B cell (primary cell): ENCODE measurements at regions of chr2 and their contacts with region 1.

Region 1: GRCh38 chr2:174465327-174465726 is 21.5 kb downstream of the GPR155 start:
- DNase-seq: no peak
- ATAC-seq: no peak
- H3K4me3 ChIP-seq: no peak overlapping the region
- H3K4me3 Mint-ChIP-seq: no peak overlapping the region
- H3K27ac ChIP-seq: no peak overlapping the region
- H3K27ac Mint-ChIP-seq: no peak overlapping the region
- H3K4me1 ChIP-seq: no peaks in the 10 kb centered on the region
- H3K4me1 Mint-ChIP-seq: no peaks in the 10 kb centered on the region
- H3K27me3 ChIP-seq: no peaks in the 10 kb centered on the region
- H3K27me3 Mint-ChIP-seq: no peaks in the 10 kb centered on the region
- CTCF ChIP-seq: no peak

Region 2: DNA sequence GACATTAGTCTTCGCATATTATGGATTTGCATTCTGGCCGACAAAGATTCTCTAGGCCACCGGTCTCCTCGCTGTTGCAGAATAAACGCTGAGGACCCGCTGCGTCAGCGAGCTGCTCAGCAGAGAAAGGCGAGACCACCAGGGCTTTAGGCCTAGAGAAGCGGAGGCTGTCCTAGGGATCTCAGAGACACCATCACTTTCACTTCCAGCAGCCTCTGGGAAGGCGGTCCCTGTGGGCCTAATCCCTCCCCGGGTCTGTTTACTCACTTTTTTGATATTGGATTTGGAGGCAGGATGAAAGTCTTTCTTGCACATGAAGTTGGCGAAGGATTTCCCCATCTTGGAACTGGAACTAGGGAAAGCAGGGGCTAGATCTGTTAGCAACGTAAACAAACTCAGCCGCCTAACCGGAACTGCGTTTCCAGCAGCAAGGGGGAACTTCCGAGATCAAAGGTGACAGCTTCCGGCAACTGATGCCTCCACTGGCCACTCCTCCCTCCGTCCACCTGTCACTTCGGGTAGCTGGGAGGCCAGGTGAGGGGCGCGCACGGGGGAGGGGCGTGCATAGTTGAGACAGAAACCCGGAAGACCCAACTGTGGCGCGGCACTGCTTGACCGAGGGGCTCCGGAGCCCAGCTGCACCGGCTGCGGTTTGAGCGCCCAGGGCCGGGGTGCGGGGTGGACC is 69.9 kb before region 1 on chr2 and contains the start of gene SCRN3:
- CTCF ChIA-PET with region 1: interaction called, 13 read pairs
- POLR2A ChIA-PET with region 1: no interaction called
- intact Hi-C with region 1: no loop called
- DNase-seq: peak; percentile 87
- ATAC-seq: peak; percentile 94
- H3K4me3 ChIP-seq: peak within 1 kb of the TSS; percentile 81 to 97 (median 90)
- H3K4me3 Mint-ChIP-seq: peak within 1 kb of the TSS; percentile 99
- H3K27ac ChIP-seq: peak within 1 kb of the TSS; percentile 88 to 94
- H3K27ac Mint-ChIP-seq: peak within 1 kb of the TSS; percentile 99
- H3K4me1 ChIP-seq: peaks cover 14 to 24% of the 10 kb centered on the region in 2 donors
- H3K4me1 Mint-ChIP-seq: peaks cover 39% of the 10 kb centered on the region
- H3K27me3 ChIP-seq: no peaks in the 10 kb centered on the region
- H3K27me3 Mint-ChIP-seq: no peaks in the 10 kb centered on the region
- CTCF ChIP-seq: no peak
- total RNA-seq, gene SCRN3: 16.9 and 21.6 TPM in 2 replicates

Region 3: DNA sequence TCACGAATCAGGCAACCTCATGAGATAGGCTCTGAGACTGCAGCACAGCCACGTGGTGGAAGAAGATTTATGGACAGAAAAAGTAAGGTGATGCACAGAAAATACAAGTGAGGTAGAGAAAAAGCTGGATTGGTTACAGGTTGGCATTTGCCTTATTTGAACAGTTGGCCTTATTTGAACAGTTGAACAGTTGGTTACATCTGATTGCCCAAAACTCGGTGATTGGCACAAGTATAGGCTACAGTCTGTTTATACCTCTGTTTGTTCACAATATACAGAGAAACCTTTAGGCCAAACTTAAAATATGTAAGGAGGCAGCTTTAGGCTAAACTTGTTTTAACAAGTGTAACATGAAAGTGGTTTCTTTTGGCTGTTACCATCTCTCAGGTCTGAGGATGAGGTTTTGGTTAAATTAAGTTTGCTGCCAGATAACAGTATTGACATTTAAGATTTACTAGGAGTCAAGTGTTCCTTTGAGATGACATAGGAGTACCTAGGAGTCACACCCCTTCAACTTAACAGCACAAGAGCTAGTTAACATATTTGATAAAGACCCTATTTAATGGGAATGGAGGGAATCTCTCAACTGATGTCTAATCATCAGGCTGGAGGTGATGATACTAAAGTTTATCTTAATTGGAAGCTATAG is 38.0 kb after region 1 on chr2:
- CTCF ChIA-PET with region 1: interaction called, 16 read pairs
- POLR2A ChIA-PET with region 1: interaction called, 3 read pairs
- intact Hi-C with region 1: no loop called
- DNase-seq: no peak
- ATAC-seq: no peak
- H3K4me3 ChIP-seq: no peak overlapping the region
- H3K4me3 Mint-ChIP-seq: no peak overlapping the region
- H3K27ac ChIP-seq: no peak overlapping the region
- H3K27ac Mint-ChIP-seq: no peak overlapping the region
- H3K4me1 ChIP-seq: no peaks in the 10 kb centered on the region
- H3K4me1 Mint-ChIP-seq: no peaks in the 10 kb centered on the region
- H3K27me3 ChIP-seq: peaks cover 0 to 3% (median 0%) of the 10 kb centered on the region in 4 experiments
- H3K27me3 Mint-ChIP-seq: peaks cover 4% of the 10 kb centered on the region
- CTCF ChIP-seq: no peak

Region 4: DNA sequence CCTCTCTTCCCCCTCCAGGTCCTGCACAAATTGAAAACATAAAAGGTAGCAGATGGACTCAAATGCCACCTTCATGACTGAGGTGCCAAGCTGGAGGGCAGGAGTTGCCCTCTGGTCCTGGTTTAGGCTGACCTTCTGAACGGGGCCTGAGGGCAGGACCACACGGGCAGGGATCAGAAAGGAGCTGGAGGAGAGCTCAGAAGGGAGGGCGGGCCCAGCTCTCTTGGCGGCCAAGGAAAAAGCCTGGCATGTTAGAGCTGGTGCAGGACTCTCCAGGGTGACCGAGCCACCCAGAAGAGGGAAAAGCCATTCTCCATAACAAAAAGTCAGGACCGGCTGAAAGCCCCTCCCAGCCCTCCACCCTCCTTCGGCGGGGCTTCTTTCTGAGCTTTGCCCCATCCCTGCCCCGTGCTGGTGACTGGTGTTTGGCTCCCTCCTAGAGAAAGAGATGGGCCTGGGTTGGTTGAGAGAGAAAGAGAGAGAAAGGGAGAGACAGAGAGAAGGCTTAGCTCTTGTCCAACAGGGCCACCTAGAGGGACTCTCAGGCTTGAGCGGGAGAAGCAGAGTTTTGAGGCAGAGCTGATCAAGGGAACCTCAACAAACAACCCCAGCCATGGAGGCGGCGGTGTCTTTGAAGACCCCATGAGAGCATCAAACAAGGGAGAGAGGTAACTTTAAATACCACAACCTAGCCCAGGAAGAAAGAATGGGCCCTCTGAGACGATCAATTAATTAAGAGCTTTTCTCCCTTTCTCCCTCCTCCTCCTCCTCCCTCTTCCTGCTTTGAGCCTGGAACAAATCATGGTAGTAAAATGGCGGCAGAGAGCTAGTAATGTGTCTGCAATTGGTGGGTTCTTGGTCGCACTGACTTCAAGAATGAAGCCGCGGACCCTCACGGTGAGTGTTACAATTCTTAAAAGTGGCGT is 81.5 kb after region 1 on chr2:
- CTCF ChIA-PET with region 1: interaction called, 50 read pairs
- POLR2A ChIA-PET with region 1: no interaction called
- intact Hi-C with region 1: loop called (anchors 2 kb)
- DNase-seq: no peak
- ATAC-seq: peak; percentile 24
- H3K4me3 ChIP-seq: no peak overlapping the region
- H3K4me3 Mint-ChIP-seq: no peak overlapping the region
- H3K27ac ChIP-seq: no peak overlapping the region
- H3K27ac Mint-ChIP-seq: no peak overlapping the region
- H3K4me1 ChIP-seq: peaks cover 4 to 6% of the 10 kb centered on the region in 2 donors
- H3K4me1 Mint-ChIP-seq: peaks cover 7% of the 10 kb centered on the region
- H3K27me3 ChIP-seq: no peaks in the 10 kb centered on the region
- H3K27me3 Mint-ChIP-seq: no peaks in the 10 kb centered on the region
- CTCF ChIP-seq: peak; percentile 11

Region 5: GRCh38 chr2:174577967-174578589 is 112.8 kb after region 1 on chr2:
- CTCF ChIA-PET with region 1: interaction called, 25 read pairs
- POLR2A ChIA-PET with region 1: no interaction called
- intact Hi-C with region 1: loop called (anchors 1 kb)
- DNase-seq: peak; percentile 78
- ATAC-seq: peak; percentile 72
- H3K4me3 ChIP-seq: no peak overlapping the region
- H3K4me3 Mint-ChIP-seq: no peak overlapping the region
- H3K27ac ChIP-seq: peak overlapping the region in 1 of 2 donors; percentile 72
- H3K27ac Mint-ChIP-seq: peak overlapping the region; percentile 57
- H3K4me1 ChIP-seq: peaks cover 31 to 34% of the 10 kb centered on the region in 2 donors
- H3K4me1 Mint-ChIP-seq: peaks cover 52% of the 10 kb centered on the region
- H3K27me3 ChIP-seq: no peaks in the 10 kb centered on the region
- H3K27me3 Mint-ChIP-seq: no peaks in the 10 kb centered on the region
- CTCF ChIP-seq: peak; percentile 81

Region 6: GRCh38 chr2:174656671-174657176 is 191.4 kb after region 1 on chr2:
- CTCF ChIA-PET with region 1: interaction called, 15 read pairs
- POLR2A ChIA-PET with region 1: no interaction called
- intact Hi-C with region 1: no loop called
- DNase-seq: no peak
- ATAC-seq: peak; percentile 31
- H3K4me3 ChIP-seq: no peak overlapping the region
- H3K4me3 Mint-ChIP-seq: no peak overlapping the region
- H3K27ac ChIP-seq: no peak overlapping the region
- H3K27ac Mint-ChIP-seq: no peak overlapping the region
- H3K4me1 ChIP-seq: no peaks in the 10 kb centered on the region
- H3K4me1 Mint-ChIP-seq: peaks cover 5% of the 10 kb centered on the region
- H3K27me3 ChIP-seq: no peaks in the 10 kb centered on the region
- H3K27me3 Mint-ChIP-seq: no peaks in the 10 kb centered on the region
- CTCF ChIP-seq: no peak

Region 7: GRCh38 chr2:174697255-174697654 is 231.9 kb after region 1 on chr2:
- CTCF ChIA-PET with region 1: interaction called, 194 read pairs
- POLR2A ChIA-PET with region 1: no interaction called
- intact Hi-C with region 1: no loop called
- DNase-seq: peak; percentile 73
- ATAC-seq: peak; percentile 92
- H3K4me3 ChIP-seq: no peak overlapping the region
- H3K4me3 Mint-ChIP-seq: no peak overlapping the region
- H3K27ac ChIP-seq: no peak overlapping the region
- H3K27ac Mint-ChIP-seq: no peak overlapping the region
- H3K4me1 ChIP-seq: no peaks in the 10 kb centered on the region
- H3K4me1 Mint-ChIP-seq: no peaks in the 10 kb centered on the region
- H3K27me3 ChIP-seq: peaks cover 0 to 18% (median 0%) of the 10 kb centered on the region in 4 experiments
- H3K27me3 Mint-ChIP-seq: peaks cover 16% of the 10 kb centered on the region
- CTCF ChIP-seq: peak; percentile 84

Region 8: DNA sequence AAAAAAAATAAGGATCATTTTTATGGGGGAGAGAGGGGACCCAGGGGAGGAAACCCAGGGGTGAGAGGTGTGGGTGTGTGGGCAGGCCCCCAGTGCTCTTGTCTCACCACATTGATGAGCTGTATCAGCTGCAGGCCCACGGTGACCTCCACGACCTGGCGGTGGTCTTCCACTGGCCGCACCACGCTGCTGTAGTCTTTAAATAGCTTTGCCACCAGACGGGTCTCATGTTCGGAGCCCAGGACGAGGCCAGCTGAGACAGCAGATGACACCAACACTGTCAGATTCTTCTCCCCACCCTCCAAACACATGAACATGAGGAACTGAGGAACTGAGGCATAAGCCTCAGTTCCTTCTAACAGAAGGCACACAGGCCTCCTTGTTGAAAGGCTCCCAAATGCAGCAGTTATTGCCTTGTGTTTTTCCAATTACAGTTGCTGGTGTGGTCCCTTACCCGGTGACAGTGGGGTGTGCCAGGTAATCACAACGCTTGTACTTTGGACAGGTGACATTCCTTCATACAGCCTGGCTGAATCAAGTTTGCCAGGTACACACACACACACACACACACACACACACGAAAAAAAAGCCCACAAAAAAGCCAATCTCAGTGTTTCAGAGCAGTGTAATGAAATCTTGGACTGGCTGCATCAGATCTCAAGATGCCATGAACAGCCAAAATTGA is 294.2 kb after region 1 on chr2:
- CTCF ChIA-PET with region 1: no interaction called
- POLR2A ChIA-PET with region 1: no interaction called
- intact Hi-C with region 1: no loop called
- DNase-seq: no peak
- ATAC-seq: no peak
- H3K4me3 ChIP-seq: no peak overlapping the region
- H3K4me3 Mint-ChIP-seq: no peak overlapping the region
- H3K27ac ChIP-seq: no peak overlapping the region
- H3K27ac Mint-ChIP-seq: no peak overlapping the region
- H3K4me1 ChIP-seq: no peaks in the 10 kb centered on the region
- H3K4me1 Mint-ChIP-seq: peaks cover 2% of the 10 kb centered on the region
- H3K27me3 ChIP-seq: peaks cover 0 to 10% (median 0%) of the 10 kb centered on the region in 4 experiments
- H3K27me3 Mint-ChIP-seq: peaks cover 28% of the 10 kb centered on the region
- CTCF ChIP-seq: no peak